ENCODE measurements at regions of chr15 and their contacts with region 1.

Region 1: GRCh38 chr15:44286814-44287452 is 1.6 kb upstream of the GOLM2 start:
- DNase-seq: peak; percentile 60
- H3K4me3 Mint-ChIP-seq: peak overlapping the region; percentile 88
- H3K27ac Mint-ChIP-seq: peak overlapping the region; percentile 99
- H3K4me1 Mint-ChIP-seq: peaks cover 36% of the 10 kb centered on the region
- H3K27me3 Mint-ChIP-seq: peaks cover 9% of the 10 kb centered on the region

Region 2: DNA sequence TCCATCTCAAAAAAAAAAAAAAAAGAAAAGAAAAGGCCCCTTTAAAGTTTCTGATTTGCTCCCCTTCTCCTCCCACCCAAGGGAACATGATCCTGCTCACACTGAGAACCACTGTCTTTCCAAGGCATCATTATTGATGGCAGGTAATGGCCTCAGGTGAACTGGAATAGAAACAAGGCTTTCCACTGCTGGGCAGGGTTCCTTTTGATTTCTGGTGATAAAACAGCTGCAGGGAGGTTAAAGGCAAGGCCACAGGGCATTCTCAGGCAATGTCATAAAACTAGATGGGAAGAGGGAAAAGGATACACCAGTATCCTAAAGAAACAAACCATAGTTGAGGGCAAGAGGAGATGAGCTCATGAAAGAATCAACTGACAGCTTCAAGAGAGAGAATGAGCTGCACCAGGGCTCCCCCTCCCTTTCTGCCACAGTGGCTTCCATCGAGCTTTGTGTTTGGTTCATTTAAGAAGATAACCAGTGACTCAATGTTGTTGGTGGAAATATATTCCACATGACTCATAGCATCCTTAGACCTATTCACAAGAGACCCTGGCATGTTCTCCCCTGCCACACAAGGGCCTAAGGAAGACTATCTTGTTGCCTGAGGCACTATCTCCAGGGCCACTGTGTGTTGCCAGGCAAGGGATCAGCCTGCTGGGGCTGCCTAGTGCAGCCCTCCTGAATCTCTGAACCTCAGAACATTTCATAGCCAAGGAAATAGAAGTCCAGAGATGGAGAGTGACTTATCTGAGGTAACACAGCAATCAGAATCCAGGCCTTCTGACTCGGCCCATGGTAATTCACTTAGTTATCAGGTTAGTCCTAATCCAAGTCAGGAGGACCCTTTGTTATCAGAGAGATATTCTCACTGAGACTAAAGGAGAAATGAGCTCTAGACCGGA is 373.7 kb before region 1 on chr15:
- intact Hi-C with region 1: no loop called
- DNase-seq: no peak
- H3K4me3 Mint-ChIP-seq: no peak overlapping the region
- H3K27ac Mint-ChIP-seq: no peak overlapping the region
- H3K4me1 Mint-ChIP-seq: peaks cover 5% of the 10 kb centered on the region
- H3K27me3 Mint-ChIP-seq: no peaks in the 10 kb centered on the region

Region 3: GRCh38 chr15:44102675-44103254 is 184.2 kb before region 1 on chr15:
- intact Hi-C with region 1: no loop called
- DNase-seq: no peak
- H3K4me3 Mint-ChIP-seq: no peak overlapping the region
- H3K27ac Mint-ChIP-seq: no peak overlapping the region
- H3K4me1 Mint-ChIP-seq: no peaks in the 10 kb centered on the region
- H3K27me3 Mint-ChIP-seq: peaks cover 22% of the 10 kb centered on the region

Region 4: GRCh38 chr15:44319385-44319784 is 32.5 kb after region 1 on chr15:
- intact Hi-C with region 1: no loop called
- DNase-seq: peak; percentile 56
- H3K4me3 Mint-ChIP-seq: no peak overlapping the region
- H3K27ac Mint-ChIP-seq: no peak overlapping the region
- H3K4me1 Mint-ChIP-seq: peaks cover 16% of the 10 kb centered on the region
- H3K27me3 Mint-ChIP-seq: no peaks in the 10 kb centered on the region

Region 5: DNA sequence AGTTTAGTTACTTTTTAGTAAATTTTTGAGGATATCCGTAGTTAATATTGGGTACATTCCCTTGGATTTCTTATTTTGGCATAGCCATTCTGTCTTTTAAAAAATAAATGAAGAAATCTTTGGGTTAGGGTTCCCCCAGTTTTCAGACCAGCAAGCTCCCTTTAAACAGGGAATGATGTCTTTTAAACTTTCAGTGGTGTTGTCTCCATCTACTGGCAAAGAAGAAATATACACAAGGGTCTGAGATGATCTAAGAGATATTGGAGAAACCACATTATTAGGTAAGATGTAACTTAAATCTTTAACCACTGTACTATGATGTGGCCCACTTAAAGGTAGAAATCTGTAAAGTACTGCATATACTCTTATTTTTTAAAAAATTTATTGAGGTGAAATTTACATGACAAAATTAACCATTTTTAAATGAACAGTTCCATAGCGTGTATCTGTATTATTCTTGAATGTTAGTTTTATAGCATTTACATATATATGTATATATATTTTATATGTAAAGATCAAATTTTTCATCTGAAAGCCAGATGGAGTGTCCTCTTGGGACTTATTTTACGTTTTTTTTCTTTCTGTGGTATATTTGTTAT is 214.9 kb after region 1 on chr15:
- intact Hi-C with region 1: loop called (anchors 2 kb)
- DNase-seq: no peak
- H3K4me3 Mint-ChIP-seq: no peak overlapping the region
- H3K27ac Mint-ChIP-seq: peak overlapping the region; percentile 3
- H3K4me1 Mint-ChIP-seq: peaks cover 17% of the 10 kb centered on the region
- H3K27me3 Mint-ChIP-seq: no peaks in the 10 kb centered on the region

Region 6: DNA sequence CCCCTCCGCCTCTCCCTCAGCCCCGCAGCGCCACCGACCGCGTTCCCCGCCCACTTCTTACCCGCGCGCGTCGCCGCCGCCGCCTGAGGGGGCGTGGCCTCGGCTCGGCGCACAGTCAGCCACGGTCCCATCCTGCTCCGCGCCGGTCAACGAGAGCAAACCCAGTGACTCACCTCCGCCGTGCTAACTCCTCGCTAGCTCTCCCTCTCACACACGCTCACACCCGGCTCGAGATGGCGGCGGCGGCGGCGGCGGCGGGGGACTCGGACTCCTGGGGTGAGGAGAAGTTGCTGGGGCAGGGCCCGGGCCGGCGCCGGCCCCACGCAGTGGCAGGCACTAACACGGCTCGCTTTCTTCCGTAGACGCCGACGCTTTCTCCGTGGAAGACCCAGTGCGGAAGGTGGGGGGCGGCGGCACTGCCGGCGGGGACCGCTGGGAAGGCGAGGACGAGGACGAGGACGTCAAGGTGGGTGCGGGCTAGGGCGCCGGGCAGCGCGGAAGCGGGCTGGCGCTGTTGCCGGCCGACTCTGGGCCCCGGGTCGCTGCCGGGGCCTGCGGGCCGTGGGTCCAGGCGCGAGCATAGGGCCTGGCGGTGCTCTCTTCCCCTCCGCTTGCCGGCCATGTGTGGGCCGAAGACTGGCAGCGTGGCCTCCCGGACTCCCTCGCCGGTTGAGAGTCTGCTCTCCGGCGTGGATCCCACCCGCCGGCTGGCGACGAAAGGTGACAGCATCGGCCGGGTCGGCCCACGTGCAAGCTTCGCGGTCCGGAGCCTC is 250.2 kb after region 1 on chr15 and contains the start of gene EIF3J:
- intact Hi-C with region 1: loop called (anchors 2 kb)
- DNase-seq: peak; percentile 98
- H3K4me3 Mint-ChIP-seq: peak within 1 kb of the TSS; percentile 84
- H3K27ac Mint-ChIP-seq: peak within 1 kb of the TSS; percentile 96
- H3K4me1 Mint-ChIP-seq: peaks cover 43% of the 10 kb centered on the region
- H3K27me3 Mint-ChIP-seq: no peaks in the 10 kb centered on the region
- total RNA-seq, gene EIF3J: 161 and 166 TPM in 2 replicates

Measured in activated CD4-positive, alpha-beta T cell treated with anti-CD3 and anti-CD28 coated beads, Interleukin-2, amount 10 ng/mL, durations not matched to agents 24 days and 14 days (primary cell).